ENCODE measurements at regions of chr2 and their contacts with region 1.

Region 1: GRCh38 chr2:219642465-219643080 is 15.1 kb downstream of the SLC4A3 start:
- DNase-seq: peak; percentile 96
- H3K4me3 ChIP-seq: no peak overlapping the region
- H3K27ac ChIP-seq: no peak overlapping the region
- H3K4me1 ChIP-seq: peaks cover 4% of the 10 kb centered on the region
- H3K27me3 ChIP-seq: no peaks in the 10 kb centered on the region
- CTCF ChIP-seq: peak; percentile 90 to 100 (median 96)
- POLR2A ChIP-seq: no peak

Region 2: DNA sequence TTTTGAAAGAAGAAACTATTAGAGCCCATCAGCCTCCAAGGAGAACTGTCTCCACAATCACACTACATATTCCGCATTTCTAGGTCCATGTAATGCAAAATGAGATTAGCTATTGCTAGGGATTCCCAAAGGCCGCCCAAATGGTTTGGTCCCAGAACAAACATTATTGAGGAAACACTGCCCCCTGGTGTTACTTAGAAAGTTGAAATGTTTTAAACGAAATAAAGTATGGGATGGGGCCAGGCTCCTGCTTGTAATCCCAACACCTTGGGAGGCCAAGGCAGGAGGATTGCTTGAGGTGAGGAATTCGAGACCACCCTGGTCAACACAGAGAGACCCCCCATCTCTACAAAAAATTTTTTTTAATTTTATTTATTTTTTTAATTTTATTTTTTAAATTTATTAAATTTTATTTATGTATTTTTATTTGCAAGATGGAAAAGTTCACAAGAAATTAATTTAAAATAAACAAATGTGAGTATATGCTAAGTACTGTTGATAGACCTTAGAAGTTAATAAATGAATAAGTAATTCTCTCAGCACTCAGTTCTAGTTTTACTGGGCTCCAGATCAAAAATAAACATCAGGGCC is 487.4 kb before region 1 on chr2:
- intact Hi-C with region 1: loop called (anchors 5 kb)
- DNase-seq: peak; percentile 72
- H3K4me3 ChIP-seq: no peak overlapping the region
- H3K27ac ChIP-seq: no peak overlapping the region
- H3K4me1 ChIP-seq: no peaks in the 10 kb centered on the region
- H3K27me3 ChIP-seq: no peaks in the 10 kb centered on the region
- CTCF ChIP-seq: peak; percentile 36 to 82 (median 78)
- POLR2A ChIP-seq: no peak

Region 3: DNA sequence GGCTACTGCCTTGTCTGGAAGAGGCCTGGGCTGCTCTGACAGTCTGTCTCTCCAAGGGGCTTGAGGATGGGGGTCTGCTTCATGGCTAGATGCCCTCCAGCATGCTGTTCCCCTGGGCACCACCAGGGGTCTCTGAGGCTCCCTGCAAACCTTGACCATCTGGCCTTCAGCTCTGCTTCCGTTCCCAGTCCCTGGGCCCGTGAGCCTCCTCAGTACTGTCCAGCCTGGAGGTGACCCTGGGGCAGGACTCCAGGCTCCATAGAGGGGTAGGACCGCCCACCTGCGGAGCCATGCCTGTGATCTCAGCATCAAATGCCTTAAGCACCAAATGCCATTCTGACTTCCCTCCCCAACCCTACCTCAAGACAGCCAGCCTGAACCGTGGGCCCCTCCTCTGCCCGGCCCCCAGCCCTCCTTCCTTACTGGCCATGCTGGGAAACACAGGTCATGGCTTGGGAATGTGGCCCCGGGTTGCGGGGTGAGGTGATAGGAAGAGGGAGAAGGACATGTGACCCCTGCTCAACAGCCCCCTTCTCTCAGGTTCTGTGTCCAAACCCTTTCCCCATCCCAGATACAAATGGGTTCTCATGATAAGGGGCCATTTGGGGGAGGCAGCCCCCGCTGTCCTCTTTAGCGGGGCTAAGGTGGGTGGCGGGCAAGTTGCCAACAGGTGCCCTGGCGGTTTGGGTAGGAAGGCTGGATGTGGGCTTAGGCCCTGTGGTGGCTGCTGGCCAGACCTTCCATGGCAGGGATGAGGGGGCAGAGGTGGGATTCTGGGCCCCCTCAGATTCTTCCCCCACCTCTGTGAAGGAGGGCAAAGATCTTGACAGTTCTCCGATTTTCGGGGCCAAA is 182.9 kb before region 1 on chr2:
- intact Hi-C with region 1: no loop called
- DNase-seq: peak; percentile 31
- H3K4me3 ChIP-seq: no peak overlapping the region
- H3K27ac ChIP-seq: peak overlapping the region; percentile 54 to 65
- H3K4me1 ChIP-seq: no peaks in the 10 kb centered on the region
- H3K27me3 ChIP-seq: no peaks in the 10 kb centered on the region
- CTCF ChIP-seq: peak; percentile 48 to 89 (median 70)
- POLR2A ChIP-seq: no peak

Region 4: DNA sequence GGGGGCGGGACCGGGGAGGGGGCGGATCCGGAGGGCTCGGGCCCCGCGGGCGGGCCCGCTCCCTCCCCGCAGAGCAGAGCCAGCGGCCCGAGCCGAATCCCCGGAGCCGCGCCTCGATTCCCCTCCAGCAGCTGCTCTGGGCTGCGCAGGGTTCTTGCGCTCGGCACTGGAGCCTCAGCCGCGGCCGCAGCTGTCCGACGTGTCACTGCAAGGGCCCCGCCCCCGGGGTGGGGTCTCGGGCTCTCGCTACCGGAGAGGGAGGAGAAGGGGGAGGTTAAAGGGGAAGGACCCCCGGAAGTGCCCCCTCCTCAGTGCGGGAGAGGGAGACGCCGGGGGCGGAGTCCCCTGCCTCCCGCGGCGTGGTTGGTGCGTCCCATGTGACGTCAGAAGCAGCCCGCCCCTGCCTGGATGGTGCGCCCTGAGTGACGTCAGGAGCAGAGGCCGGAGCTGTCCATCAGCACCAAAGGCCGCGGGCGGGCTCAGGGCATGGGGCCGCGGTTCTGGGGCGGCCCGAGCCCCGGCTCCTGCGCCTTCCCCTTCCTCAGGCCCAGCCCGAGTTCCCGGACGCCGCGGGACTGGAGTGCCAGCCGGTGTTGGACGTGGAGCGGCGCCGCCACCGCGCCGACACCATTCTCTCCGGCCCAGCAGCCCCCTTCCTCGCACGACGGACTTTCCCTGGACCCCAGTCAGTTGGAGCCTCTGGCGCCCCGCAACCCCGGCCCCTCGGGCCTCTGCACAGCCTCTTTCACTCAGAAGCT is 98.8 kb before region 1 on chr2 and contains the starts of genes CHPF and TMEM198:
- intact Hi-C with region 1: loop called (anchors 1 kb)
- DNase-seq: peak; percentile 99
- H3K4me3 ChIP-seq: peak within 1 kb of the TSS; percentile 62 to 79
- H3K27ac ChIP-seq: peak within 1 kb of the TSS; percentile 93 to 94
- H3K4me1 ChIP-seq: peaks cover 11% of the 10 kb centered on the region
- H3K27me3 ChIP-seq: no peaks in the 10 kb centered on the region
- CTCF ChIP-seq: peak in 2 of 4 experiments; percentile 4 to 20
- POLR2A ChIP-seq: peak; percentile 73
- total RNA-seq, gene CHPF: 150 to 819 TPM
- total RNA-seq, gene TMEM198: 5.7 to 11.5 TPM

Region 5: DNA sequence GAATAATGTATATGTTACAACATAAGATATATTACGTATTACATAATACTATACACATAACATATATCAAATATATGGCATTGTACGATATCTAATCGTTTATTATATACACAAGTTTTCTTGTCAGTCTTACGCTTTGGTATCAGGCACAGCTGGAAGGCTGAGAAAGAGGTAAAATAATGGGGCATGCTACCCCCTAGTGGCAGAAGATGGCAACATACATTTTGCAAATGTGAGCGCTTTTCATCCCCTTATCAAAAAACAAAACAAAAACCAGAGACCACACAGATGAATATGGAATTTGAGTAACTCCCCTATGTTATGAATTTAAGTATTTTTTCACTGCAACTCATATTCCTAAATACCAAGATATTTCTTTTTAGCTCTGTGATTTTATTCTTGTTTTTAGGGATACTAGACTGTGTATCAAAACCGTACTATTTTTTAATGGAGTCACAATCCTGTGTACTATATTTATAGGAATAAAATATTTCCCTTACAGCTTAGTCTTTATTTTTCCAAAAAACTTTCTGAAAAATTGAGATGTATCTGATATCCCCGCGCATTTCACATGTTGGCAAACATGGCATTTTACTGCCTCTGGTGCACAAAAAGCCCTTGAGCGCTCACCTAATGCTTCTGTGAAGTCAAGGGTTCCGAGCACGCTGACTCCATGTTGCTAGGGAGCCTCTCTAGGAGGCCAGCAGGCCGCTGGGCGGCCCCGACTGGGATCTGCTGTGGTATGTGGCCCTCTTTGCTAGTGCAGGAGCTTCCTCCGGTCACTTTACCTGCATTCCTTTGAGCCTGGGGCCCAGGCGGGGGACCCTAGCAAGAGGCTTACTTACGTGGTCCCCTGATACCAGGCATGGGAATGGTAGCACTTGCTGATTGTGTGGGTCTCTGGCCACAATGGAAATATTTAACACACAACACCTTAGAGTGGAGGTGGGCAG is 47.4 kb after region 1 on chr2:
- intact Hi-C with region 1: loop called (anchors 5 kb)
- DNase-seq: peak; percentile 44
- H3K4me3 ChIP-seq: no peak overlapping the region
- H3K27ac ChIP-seq: no peak overlapping the region
- H3K4me1 ChIP-seq: no peaks in the 10 kb centered on the region
- H3K27me3 ChIP-seq: no peaks in the 10 kb centered on the region
- CTCF ChIP-seq: peak; percentile 42 to 84 (median 80)
- POLR2A ChIP-seq: no peak

Region 6: DNA sequence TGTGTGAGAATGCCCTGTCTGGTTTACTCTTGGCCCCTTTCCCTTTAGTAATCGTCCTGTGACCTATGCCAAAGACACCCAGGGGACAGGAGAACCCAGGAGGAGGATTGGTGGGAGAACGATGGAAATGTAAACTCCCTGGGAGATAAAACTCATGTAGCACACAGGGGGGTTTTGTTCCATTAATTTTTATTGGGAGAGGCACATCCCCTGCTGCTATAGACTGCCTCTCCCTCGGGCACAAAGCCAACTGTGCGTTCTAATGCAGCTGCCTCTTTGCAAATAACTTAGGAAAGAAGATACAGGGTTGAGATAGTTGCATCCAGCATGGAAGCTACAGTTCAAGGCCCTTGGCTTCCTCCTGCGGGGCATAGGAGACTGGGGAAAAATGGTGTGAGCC is 474.5 kb after region 1 on chr2:
- intact Hi-C with region 1: no loop called
- DNase-seq: no peak
- H3K4me3 ChIP-seq: no peak overlapping the region
- H3K27ac ChIP-seq: no peak overlapping the region
- H3K4me1 ChIP-seq: no peaks in the 10 kb centered on the region
- H3K27me3 ChIP-seq: no peaks in the 10 kb centered on the region
- CTCF ChIP-seq: no peak
- POLR2A ChIP-seq: no peak